Activated CD4-positive, alpha-beta T cell treated with anti-CD3 and anti-CD28 coated beads for 36 hours (primary cell): ENCODE measurements at regions of chr2 and their contacts with region 1.

Region 1: GRCh38 chr2:229714736-229715541 is 584 bp upstream of the DNER start:
- DNase-seq: peak; percentile 63
- ATAC-seq: peak; percentile 58
- H3K4me3 Mint-ChIP-seq: peak overlapping the region; percentile 13
- H3K27ac Mint-ChIP-seq: no peak overlapping the region
- H3K4me1 Mint-ChIP-seq: peaks cover 11% of the 10 kb centered on the region
- H3K27me3 Mint-ChIP-seq: peaks cover 60% of the 10 kb centered on the region

Region 2: DNA sequence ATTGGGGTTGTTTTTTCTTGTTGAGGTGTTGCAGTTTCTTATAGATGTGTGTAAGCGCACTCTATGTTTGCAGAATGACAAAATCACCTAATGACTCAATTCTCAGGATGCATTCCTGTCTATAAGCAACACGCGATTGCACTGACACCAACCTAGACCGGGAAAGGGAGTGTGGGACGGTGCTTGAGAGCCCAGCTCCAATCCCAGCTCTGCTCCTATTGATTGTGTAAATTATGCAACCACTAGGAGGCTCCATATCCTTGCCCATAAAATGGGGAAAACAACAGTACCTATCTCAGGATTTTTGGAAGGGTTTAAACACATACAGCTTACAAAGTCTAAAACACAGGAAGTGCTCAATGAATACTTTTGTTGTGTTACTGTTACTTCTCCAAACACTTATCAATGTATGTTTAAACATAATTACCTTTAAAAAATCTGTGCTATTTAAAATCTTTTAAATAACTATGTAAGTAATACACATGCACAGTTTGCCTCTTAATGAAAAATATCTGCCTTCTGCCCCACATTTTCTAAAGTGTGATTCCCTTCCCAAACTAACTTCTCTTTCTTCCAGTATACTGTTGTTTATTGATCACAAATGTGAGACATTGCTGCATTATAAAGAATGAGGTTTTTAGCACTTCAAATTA is 1666.0 kb before region 1 on chr2:
- CTCF ChIA-PET with region 1: no interaction called
- POLR2A ChIA-PET with region 1: no interaction called
- intact Hi-C with region 1: loop called in 1 of 2 experiments (anchors 10 kb)
- DNase-seq: no peak
- ATAC-seq: no peak
- H3K4me3 Mint-ChIP-seq: no peak overlapping the region
- H3K27ac Mint-ChIP-seq: no peak overlapping the region
- H3K4me1 Mint-ChIP-seq: no peaks in the 10 kb centered on the region
- H3K27me3 Mint-ChIP-seq: no peaks in the 10 kb centered on the region

Region 3: DNA sequence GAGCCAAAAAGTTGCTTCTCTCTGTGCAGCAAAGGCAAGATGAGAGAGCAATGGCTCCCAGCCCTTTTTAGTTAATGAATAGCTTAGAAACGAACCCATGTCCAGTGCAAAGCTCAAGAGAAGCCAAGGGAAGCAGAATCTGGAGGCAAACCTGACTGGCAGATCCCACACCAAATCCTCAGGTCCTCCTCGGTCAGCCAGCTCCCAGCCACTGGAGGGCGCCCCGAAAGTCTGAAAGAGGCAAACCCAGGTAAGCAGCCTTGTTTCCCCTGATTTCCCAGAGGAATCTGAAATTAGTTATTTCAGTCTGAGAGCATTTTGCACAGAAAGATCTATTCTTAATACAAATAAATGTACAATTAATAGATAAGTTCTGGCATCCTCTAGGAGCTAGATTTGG is 372.6 kb before region 1 on chr2:
- CTCF ChIA-PET with region 1: no interaction called
- POLR2A ChIA-PET with region 1: no interaction called
- intact Hi-C with region 1: loop called in 1 of 2 experiments (anchors 10 kb)
- DNase-seq: peak; percentile 33
- ATAC-seq: no peak
- H3K4me3 Mint-ChIP-seq: no peak overlapping the region
- H3K27ac Mint-ChIP-seq: no peak overlapping the region
- H3K4me1 Mint-ChIP-seq: no peaks in the 10 kb centered on the region
- H3K27me3 Mint-ChIP-seq: peaks cover 1% of the 10 kb centered on the region

Region 4: GRCh38 chr2:229431327-229431954 is 283.5 kb before region 1 on chr2:
- CTCF ChIA-PET with region 1: no interaction called
- POLR2A ChIA-PET with region 1: no interaction called
- intact Hi-C with region 1: loop called in 1 of 2 experiments (anchors 5 kb)
- DNase-seq: no peak
- ATAC-seq: no peak
- H3K4me3 Mint-ChIP-seq: no peak overlapping the region
- H3K27ac Mint-ChIP-seq: no peak overlapping the region
- H3K4me1 Mint-ChIP-seq: no peaks in the 10 kb centered on the region
- H3K27me3 Mint-ChIP-seq: peaks cover 6% of the 10 kb centered on the region